Endothelial cell of umbilical vein (primary cell): ENCODE measurements at regions of chr22 and their contacts with region 1.

Region 1: DNA sequence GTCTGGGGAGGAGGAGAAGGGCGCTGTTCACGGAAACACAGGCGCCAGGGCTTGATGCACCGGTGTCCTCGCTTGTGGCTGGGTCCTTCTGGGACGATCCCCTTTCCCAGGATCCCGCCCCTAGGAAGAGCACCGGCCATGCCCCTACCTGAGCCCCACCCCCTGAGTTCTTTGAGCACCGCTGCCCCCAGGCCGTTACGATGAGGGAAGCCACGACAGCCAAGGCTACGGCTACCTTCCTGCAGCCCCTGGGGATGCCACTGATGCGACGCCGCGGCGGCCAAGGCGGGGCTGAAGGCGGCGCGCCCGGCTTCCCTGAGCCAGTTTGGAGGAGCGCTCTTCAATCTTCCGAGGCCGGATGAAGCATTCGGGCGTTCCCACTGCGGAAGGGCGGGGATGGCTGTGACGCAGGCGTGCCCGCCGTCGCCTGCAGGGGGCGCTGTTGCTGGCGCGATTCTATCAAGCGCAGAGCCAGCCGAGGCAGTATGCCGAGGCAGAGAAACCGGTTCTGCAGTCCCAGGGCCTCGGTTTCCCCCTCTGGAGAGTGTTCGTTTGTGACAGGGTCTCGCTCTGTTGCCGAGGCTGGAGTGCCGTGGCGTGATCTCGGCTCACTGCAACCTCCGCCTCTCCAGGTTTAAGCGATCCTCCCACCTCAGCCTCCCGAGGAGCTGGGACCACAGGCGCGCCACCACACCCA is 9.7 kb upstream of the NEFH start:
- DNase-seq: peak; percentile 26
- H3K4me3 ChIP-seq: no peak overlapping the region
- H3K27ac ChIP-seq: no peak overlapping the region
- H3K4me1 ChIP-seq: no peaks in the 10 kb centered on the region
- H3K27me3 ChIP-seq: peaks cover 8 to 14% of the 10 kb centered on the region in 2 experiments
- CTCF ChIP-seq: peak; percentile 93 to 95
- POLR2A ChIP-seq: no peak

Region 2: GRCh38 chr22:28978158-28978557 is 492.1 kb before region 1 on chr22:
- CTCF ChIA-PET with region 1: no interaction called
- POLR2A ChIA-PET with region 1: no interaction called
- dilution Hi-C with region 1: no loop called
- intact Hi-C with region 1: no loop called
- DNase-seq: no peak
- H3K4me3 ChIP-seq: no peak overlapping the region
- H3K27ac ChIP-seq: no peak overlapping the region
- H3K4me1 ChIP-seq: peaks cover 27% of the 10 kb centered on the region
- H3K27me3 ChIP-seq: no peaks in the 10 kb centered on the region
- CTCF ChIP-seq: no peak
- POLR2A ChIP-seq: no peak

Region 3: GRCh38 chr22:29216873-29217666 is 253.2 kb before region 1 on chr22:
- CTCF ChIA-PET with region 1: no interaction called
- POLR2A ChIA-PET with region 1: no interaction called
- dilution Hi-C with region 1: no loop called
- intact Hi-C with region 1: no loop called
- DNase-seq: no peak
- H3K4me3 ChIP-seq: no peak overlapping the region
- H3K27ac ChIP-seq: no peak overlapping the region
- H3K4me1 ChIP-seq: no peaks in the 10 kb centered on the region
- H3K27me3 ChIP-seq: no peaks in the 10 kb centered on the region
- CTCF ChIP-seq: no peak
- POLR2A ChIP-seq: no peak

Region 4: GRCh38 chr22:29483254-29483653 is 12.9 kb after region 1 on chr22:
- CTCF ChIA-PET with region 1: interaction called, 10 read pairs
- POLR2A ChIA-PET with region 1: no interaction called
- dilution Hi-C with region 1: no loop called
- intact Hi-C with region 1: no loop called
- DNase-seq: no peak
- H3K4me3 ChIP-seq: no peak overlapping the region
- H3K27ac ChIP-seq: no peak overlapping the region
- H3K4me1 ChIP-seq: peaks cover 5% of the 10 kb centered on the region
- H3K27me3 ChIP-seq: peaks cover 34 to 36% of the 10 kb centered on the region in 2 experiments
- CTCF ChIP-seq: no peak
- POLR2A ChIP-seq: no peak

Region 5: DNA sequence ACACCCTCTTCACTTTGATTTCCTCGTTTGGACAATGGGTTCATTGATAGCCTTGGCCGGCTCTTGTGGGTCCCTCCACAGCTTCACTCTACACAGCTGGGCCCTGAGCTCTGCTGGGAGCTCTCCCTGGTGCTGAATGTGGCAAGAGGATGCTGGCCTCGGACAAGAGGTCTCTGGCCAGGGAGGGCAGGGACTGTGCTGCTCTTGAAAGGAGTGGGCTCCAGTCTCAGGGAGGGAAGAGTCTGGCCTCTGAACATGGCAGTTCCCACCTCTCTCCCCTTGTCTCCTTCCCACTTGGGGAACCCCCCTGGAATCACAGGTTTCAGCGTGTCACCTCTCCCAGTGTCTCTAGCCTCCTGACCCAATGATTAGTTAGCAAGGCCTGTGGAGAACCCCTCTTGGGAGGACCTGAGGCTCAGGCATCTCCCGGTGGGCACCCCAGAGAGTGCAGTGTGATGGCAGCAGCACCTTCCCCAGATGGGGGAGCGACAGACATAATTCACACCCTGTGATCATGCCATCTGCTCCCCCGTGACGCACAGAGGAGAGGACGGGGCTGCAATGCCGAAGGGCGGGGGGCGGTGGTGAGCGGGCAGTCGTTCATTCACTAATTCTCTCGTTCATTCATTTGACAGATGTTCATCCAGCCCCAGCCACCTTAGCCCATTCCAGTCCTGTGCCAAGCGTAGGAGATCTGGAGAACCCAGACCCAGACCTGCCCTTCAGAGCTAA is 246.7 kb after region 1 on chr22:
- CTCF ChIA-PET with region 1: no interaction called
- POLR2A ChIA-PET with region 1: no interaction called
- dilution Hi-C with region 1: no loop called
- intact Hi-C with region 1: loop called (anchors 10 kb)
- DNase-seq: peak; percentile 70
- H3K4me3 ChIP-seq: no peak overlapping the region
- H3K27ac ChIP-seq: no peak overlapping the region
- H3K4me1 ChIP-seq: no peaks in the 10 kb centered on the region
- H3K27me3 ChIP-seq: peaks cover 15 to 19% of the 10 kb centered on the region in 2 experiments
- CTCF ChIP-seq: no peak
- POLR2A ChIP-seq: no peak